ENCODE measurements at regions of chr13 and their contacts with region 1.

Region 1: GRCh38 chr13:73608711-73609485 is 525.3 kb downstream of the KLF12 start:
- DNase-seq: no peak
- H3K4me3 ChIP-seq: no peak overlapping the region
- H3K27ac ChIP-seq: no peak overlapping the region
- H3K27me3 ChIP-seq: no peaks in the 10 kb centered on the region
- CTCF ChIP-seq: no peak

Region 2: DNA sequence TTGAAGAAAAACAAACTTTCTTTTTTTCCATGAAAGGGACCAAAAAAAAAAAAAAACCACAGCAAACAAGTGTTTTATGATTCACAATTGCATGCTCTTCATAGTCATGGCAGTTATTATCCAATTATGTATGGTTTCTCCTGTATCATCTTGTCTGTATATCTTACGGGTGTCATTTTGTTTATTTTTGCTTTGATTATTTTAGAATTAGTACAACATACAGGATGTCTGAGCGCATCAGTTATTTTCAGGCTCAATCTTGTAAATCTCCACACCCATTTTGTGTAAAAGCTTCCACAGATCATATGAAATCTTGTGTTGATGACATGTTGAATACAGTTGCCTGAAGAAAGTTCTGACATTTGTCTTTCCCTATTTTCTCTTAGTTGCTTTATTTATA is 269.8 kb before region 1 on chr13:
- CTCF ChIA-PET with region 1: interaction called, 10 read pairs
- POLR2A ChIA-PET with region 1: no interaction called
- DNase-seq: no peak
- H3K4me3 ChIP-seq: no peak overlapping the region
- H3K27ac ChIP-seq: no peak overlapping the region
- H3K27me3 ChIP-seq: no peaks in the 10 kb centered on the region
- CTCF ChIP-seq: no peak

Region 3: GRCh38 chr13:73633817-73634460 is 25.0 kb after region 1 on chr13:
- CTCF ChIA-PET with region 1: no interaction called
- POLR2A ChIA-PET with region 1: no interaction called
- DNase-seq: no peak
- H3K4me3 ChIP-seq: no peak overlapping the region
- H3K27ac ChIP-seq: no peak overlapping the region
- H3K27me3 ChIP-seq: peaks cover 4% of the 10 kb centered on the region
- CTCF ChIP-seq: no peak

Region 4: GRCh38 chr13:73809561-73809960 is 200.7 kb after region 1 on chr13:
- CTCF ChIA-PET with region 1: no interaction called
- POLR2A ChIA-PET with region 1: no interaction called
- DNase-seq: peak; percentile 68
- H3K4me3 ChIP-seq: no peak overlapping the region
- H3K27ac ChIP-seq: peak overlapping the region; percentile 47
- H3K27me3 ChIP-seq: no peaks in the 10 kb centered on the region
- CTCF ChIP-seq: no peak